ENCODE measurements at regions of chr17 and their contacts with region 1.

Region 1: GRCh38 chr17:15999439-16000350 is at the starts of genes TTC19 and ZSWIM7:
- DNase-seq: peak; percentile 95
- H3K4me3 Mint-ChIP-seq: peak within 1 kb of the TSS; percentile 82
- H3K27ac Mint-ChIP-seq: peak within 1 kb of the TSS; percentile 93
- H3K4me1 Mint-ChIP-seq: peaks cover 15% of the 10 kb centered on the region
- H3K27me3 Mint-ChIP-seq: no peaks in the 10 kb centered on the region
- CTCF ChIP-seq: no peak
- total RNA-seq, gene TTC19: 46.7 and 49.5 TPM in 2 replicates
- total RNA-seq, gene ZSWIM7: 44.1 and 63.3 TPM in 2 replicates

Region 2: DNA sequence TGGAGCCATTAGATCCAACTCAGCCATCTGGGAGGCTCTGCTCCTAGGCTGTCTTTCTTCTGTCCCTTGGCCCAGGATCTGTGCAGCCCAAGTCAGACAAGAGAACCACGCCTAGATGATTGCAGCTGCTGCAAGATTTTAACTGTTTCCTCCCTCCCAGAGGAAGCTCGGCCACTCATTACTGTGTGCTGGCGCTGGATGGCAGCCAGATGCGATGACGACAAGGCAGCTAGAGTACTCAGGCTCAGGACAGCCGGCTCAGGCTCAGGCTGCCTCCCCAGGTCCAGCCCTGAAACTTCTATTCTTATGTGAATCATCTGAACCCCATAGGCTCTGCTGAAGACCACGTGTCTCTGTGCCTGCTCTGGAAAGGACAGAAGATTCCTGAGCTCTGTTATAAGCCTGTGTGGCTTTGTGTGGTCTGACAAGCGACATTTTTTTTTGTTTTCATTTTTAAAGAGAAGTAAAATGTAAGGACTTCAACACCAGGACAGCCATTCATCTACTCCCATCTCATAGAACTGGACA is 348.0 kb before region 1 on chr17:
- CTCF ChIA-PET with region 1: interaction called, 4 read pairs
- POLR2A ChIA-PET with region 1: interaction called, 11 read pairs
- intact Hi-C with region 1: no loop called
- DNase-seq: peak; percentile 99
- H3K4me3 Mint-ChIP-seq: peak overlapping the region; percentile 83
- H3K27ac Mint-ChIP-seq: peak overlapping the region; percentile 93
- H3K4me1 Mint-ChIP-seq: peaks cover 21% of the 10 kb centered on the region
- H3K27me3 Mint-ChIP-seq: no peaks in the 10 kb centered on the region
- CTCF ChIP-seq: no peak

Region 3: GRCh38 chr17:15744885-15745284 is 254.8 kb before region 1 on chr17:
- CTCF ChIA-PET with region 1: no interaction called
- POLR2A ChIA-PET with region 1: no interaction called
- intact Hi-C with region 1: no loop called
- DNase-seq: no peak
- H3K4me3 Mint-ChIP-seq: no peak overlapping the region
- H3K27ac Mint-ChIP-seq: no peak overlapping the region
- H3K4me1 Mint-ChIP-seq: no peaks in the 10 kb centered on the region
- H3K27me3 Mint-ChIP-seq: peaks cover 14% of the 10 kb centered on the region
- CTCF ChIP-seq: no peak

Region 4: DNA sequence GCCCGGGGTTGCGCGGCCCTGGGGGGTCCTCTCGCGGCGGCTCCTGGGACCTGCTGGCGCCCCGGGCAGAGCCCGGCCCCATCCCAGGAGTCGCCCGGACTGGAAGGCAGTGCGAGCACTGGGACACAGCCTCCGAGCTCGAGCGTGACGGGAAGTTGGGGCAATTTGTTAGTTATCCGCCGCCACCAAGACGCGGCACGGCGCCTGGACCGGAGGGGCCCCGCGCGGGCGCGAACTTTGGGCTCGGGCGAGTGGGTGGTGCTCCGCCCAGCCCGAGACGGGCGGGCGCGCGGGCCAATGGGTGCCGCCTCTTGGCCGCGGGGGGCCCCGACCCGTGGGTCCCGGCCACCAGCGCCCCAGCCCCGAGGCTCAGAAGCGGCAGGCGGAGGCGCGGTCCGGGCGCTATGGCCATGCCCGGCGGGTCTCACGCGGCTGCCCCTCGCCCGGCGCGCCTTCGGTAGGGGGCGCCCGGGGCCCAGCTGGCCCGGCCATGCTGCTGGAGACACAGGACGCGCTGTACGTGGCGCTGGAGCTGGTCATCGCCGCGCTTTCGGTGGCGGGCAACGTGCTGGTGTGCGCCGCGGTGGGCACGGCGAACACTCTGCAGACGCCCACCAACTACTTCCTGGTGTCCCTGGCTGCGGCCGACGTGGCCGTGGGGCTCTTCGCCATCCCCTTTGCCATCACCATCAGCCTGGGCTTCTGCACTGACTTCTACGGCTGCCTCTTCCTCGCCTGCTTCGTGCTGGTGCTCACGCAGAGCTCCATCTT is 54.8 kb before region 1 on chr17 and contains the start of gene ADORA2B:
- CTCF ChIA-PET with region 1: interaction called, 40 read pairs
- POLR2A ChIA-PET with region 1: interaction called, 134 read pairs
- intact Hi-C with region 1: loop called (anchors 1 kb)
- DNase-seq: peak; percentile 72
- H3K4me3 Mint-ChIP-seq: peak within 1 kb of the TSS; percentile 69
- H3K27ac Mint-ChIP-seq: peak within 1 kb of the TSS; percentile 96
- H3K4me1 Mint-ChIP-seq: peaks cover 31% of the 10 kb centered on the region
- H3K27me3 Mint-ChIP-seq: no peaks in the 10 kb centered on the region
- CTCF ChIP-seq: peak; percentile 64
- total RNA-seq, gene ADORA2B: 21.7 and 26.0 TPM in 2 replicates

Region 5: DNA sequence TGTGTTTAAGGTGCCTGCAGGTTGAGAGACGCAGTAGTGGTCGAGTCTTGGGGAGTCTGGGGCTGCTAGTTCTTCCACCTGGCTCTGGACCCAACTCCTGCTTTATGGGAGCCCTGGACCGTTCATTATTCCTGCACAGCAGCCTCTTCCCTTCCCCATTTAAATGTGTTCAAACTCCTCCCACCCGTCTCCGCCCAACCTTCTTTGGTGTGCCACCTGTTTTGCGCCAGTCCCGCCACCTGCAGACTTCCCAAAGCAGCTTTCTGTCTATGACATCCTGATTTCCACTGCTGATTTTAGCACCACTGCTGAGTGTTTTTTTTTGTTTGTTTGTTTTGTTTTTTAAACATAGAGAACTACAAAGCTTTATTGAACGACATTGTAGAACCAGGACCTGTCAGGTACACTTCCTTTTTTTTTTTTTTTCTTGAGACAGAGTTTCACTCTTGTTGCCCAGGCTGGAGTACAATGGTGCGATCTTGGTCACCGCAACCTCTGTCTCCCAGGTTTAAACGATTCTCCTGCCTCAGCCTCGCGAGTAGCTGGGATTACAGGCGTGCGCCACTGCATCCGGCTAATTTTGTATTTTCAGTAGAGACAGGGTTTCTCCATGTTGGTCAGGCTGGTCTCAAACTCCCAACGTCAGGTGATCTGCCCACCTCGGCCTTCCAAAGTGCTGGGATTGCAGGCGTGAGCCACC is 41.9 kb before region 1 on chr17:
- CTCF ChIA-PET with region 1: interaction called, 3 read pairs
- POLR2A ChIA-PET with region 1: interaction called, 11 read pairs
- intact Hi-C with region 1: loop called (anchors 2 kb)
- DNase-seq: no peak
- H3K4me3 Mint-ChIP-seq: no peak overlapping the region
- H3K27ac Mint-ChIP-seq: no peak overlapping the region
- H3K4me1 Mint-ChIP-seq: peaks cover 36% of the 10 kb centered on the region
- H3K27me3 Mint-ChIP-seq: no peaks in the 10 kb centered on the region
- CTCF ChIP-seq: no peak

Region 6: GRCh38 chr17:16013943-16014407 is 14.3 kb after region 1 on chr17:
- CTCF ChIA-PET with region 1: interaction called, 6 read pairs
- POLR2A ChIA-PET with region 1: interaction called, 22 read pairs
- intact Hi-C with region 1: no loop called
- DNase-seq: peak; percentile 71
- H3K4me3 Mint-ChIP-seq: no peak overlapping the region
- H3K27ac Mint-ChIP-seq: no peak overlapping the region
- H3K4me1 Mint-ChIP-seq: peaks cover 5% of the 10 kb centered on the region
- H3K27me3 Mint-ChIP-seq: no peaks in the 10 kb centered on the region
- CTCF ChIP-seq: peak; percentile 46

Region 7: DNA sequence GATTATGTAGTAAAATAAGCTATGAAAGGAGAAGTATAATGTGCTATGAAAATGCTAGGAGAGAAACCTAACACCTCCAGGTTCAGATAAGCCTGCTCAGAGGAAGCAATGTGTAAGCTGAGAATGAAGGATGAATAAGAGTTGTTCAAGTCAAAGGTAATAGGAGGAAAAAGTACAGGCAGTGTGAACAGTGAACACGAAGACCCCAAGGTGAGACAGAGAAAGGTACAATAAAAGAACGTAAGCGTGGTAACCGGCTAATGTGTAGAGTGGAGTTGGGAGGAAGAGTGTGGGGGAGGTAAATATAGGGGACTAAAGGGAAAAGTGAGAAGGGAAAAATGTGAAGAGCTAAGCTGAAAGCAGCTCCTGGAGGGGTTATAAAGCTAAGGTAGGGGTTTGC is 74.2 kb after region 1 on chr17:
- CTCF ChIA-PET with region 1: no interaction called
- POLR2A ChIA-PET with region 1: no interaction called
- intact Hi-C with region 1: no loop called
- DNase-seq: no peak
- H3K4me3 Mint-ChIP-seq: no peak overlapping the region
- H3K27ac Mint-ChIP-seq: no peak overlapping the region
- H3K4me1 Mint-ChIP-seq: no peaks in the 10 kb centered on the region
- H3K27me3 Mint-ChIP-seq: no peaks in the 10 kb centered on the region
- CTCF ChIP-seq: no peak

Region 8: DNA sequence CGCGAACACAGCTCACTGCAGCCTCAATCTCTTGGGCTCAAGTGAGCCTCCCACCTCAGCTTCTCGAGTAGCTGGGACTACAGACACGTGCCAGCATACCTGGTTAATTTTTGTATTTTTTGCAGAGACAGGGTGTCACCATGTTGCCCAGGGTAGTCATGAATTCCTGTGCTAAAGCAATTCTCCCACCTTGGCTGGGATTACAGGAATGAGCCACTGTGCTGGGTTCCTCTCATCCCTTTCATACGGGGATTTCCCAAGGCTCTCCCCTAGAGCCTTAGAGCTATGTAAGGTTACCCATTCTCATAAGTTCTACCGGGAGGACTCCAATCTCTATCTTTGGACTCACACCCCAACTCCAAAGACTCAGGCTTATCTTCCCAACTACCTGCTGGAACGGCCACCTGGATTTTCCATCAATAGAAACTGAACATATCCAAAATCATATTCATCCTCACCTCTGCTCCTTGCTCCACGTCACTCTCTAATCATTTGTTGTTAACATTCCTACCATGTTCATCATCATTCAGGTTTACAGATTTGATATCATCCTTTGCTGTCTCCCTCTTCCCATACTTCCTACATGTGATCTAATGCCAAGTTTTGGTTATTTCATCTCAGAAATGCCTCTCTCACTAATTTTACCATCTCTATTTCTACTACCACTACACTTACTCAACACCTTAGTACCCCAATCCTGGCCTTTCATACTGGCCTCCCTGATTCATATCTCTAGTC is 123.2 kb after region 1 on chr17:
- CTCF ChIA-PET with region 1: no interaction called
- POLR2A ChIA-PET with region 1: no interaction called
- intact Hi-C with region 1: no loop called
- DNase-seq: peak; percentile 25
- H3K4me3 Mint-ChIP-seq: no peak overlapping the region
- H3K27ac Mint-ChIP-seq: peak overlapping the region; percentile 0
- H3K4me1 Mint-ChIP-seq: peaks cover 21% of the 10 kb centered on the region
- H3K27me3 Mint-ChIP-seq: no peaks in the 10 kb centered on the region
- CTCF ChIP-seq: no peak

Measured in MCF 10A (cell line).